GM12878 (cell line): ENCODE measurements at regions of chr7 and their contacts with region 1.

Region 1: GRCh38 chr7:33757562-33758165 is 147.7 kb upstream of the BMPER start:
- DNase-seq: no peak
- ATAC-seq: peak; percentile 31; the same call in 1 of the 3 replicates
- H3K4me3 ChIP-seq: no peak overlapping the region
- H3K27ac ChIP-seq: no peak overlapping the region
- H3K4me1 ChIP-seq: no peaks in the 10 kb centered on the region; the same call in 1 of the 2 replicates
- H3K27me3 ChIP-seq: peaks cover 0 to 1% of the 10 kb centered on the region in 2 experiments; a peak in 1 of 4 replicates
- CTCF ChIP-seq: peak; percentile 45 to 50 (median 49); a peak in 5 of 6 replicates
- EP300 ChIP-seq: no peak
- POLR2A ChIP-seq: no peak
- RAD21 ChIP-seq: peak; percentile 52

Region 2: DNA sequence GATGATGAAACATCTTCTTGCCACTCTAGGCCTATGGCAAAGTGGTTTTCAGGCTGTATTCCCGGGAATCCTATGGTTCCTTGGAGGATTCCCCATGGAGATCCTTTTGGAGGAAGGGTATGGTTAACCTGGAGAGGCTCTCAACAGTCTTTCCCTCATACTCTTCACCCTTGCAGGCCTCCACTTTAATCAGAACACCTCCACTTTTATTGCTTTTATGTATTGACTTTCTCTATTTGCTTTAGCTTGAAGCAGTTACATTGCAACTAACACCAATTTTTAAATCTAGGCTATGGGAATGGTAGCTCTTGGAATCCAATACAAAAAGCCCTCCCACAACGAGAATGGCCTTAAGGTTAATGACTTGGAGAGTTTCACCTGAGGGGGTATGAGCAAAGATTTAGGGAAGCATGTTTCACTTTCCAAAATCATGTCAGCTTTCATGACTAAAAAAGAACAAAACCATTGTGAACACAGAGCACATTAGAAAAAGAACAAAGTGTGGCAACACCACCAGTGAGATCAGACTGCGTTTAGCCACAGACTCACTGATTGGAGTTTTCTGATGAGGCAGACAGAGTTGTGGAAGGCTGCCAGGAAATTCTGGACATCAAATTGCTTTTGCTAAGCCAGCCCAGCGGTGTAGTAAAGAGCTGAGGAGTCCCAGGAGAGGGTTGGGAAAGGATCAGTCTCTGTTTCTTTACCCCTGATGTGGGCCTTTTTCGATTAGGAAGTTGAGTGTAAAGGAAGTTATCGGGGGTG is 17.3 kb after region 1 on chr7:
- CTCF ChIA-PET with region 1: interaction called, 10 read pairs
- POLR2A ChIA-PET with region 1: no interaction called
- RAD21 ChIA-PET with region 1: no interaction called
- SMC1A ChIA-PET with region 1: no interaction called
- in situ Hi-C with region 1: no loop called
- intact Hi-C with region 1: no loop called
- DNase-seq: no peak
- ATAC-seq: no peak
- H3K4me3 ChIP-seq: no peak overlapping the region
- H3K27ac ChIP-seq: no peak overlapping the region
- H3K4me1 ChIP-seq: no peaks in the 10 kb centered on the region
- H3K27me3 ChIP-seq: no peaks in the 10 kb centered on the region
- CTCF ChIP-seq: no peak
- EP300 ChIP-seq: no peak
- POLR2A ChIP-seq: no peak
- RAD21 ChIP-seq: no peak

Region 3: GRCh38 chr7:33807779-33808482 is 50.3 kb after region 1 on chr7:
- CTCF ChIA-PET with region 1: interaction called, 10 read pairs
- POLR2A ChIA-PET with region 1: no interaction called
- RAD21 ChIA-PET with region 1: interaction called, 3 read pairs
- SMC1A ChIA-PET with region 1: interaction called, 6 read pairs
- in situ Hi-C with region 1: no loop called
- intact Hi-C with region 1: no loop called
- DNase-seq: no peak
- ATAC-seq: peak; percentile 64; the same call in 2 of the 3 replicates
- H3K4me3 ChIP-seq: no peak overlapping the region
- H3K27ac ChIP-seq: no peak overlapping the region
- H3K4me1 ChIP-seq: no peaks in the 10 kb centered on the region
- H3K27me3 ChIP-seq: no peaks in the 10 kb centered on the region
- CTCF ChIP-seq: peak; percentile 27 to 57 (median 53)
- EP300 ChIP-seq: no peak
- POLR2A ChIP-seq: no peak
- RAD21 ChIP-seq: peak; percentile 47; the same call in 1 of the 2 replicates